B cell (primary cell): ENCODE measurements at regions of chr19 and their contacts with region 1.

Region 1: GRCh38 chr19:7799640-7800355 is 30.2 kb upstream of the EVI5L start:
- DNase-seq: peak; percentile 79
- ATAC-seq: peak; percentile 64
- H3K4me3 ChIP-seq: peak overlapping the region in 4 of 5 experiments; percentile 17 to 27 (median 20)
- H3K4me3 Mint-ChIP-seq: peak overlapping the region; percentile 60
- H3K27ac ChIP-seq: no peak overlapping the region
- H3K27ac Mint-ChIP-seq: no peak overlapping the region
- H3K4me1 ChIP-seq: peaks cover 7 to 16% of the 10 kb centered on the region in 2 donors
- H3K4me1 Mint-ChIP-seq: peaks cover 9% of the 10 kb centered on the region
- H3K27me3 ChIP-seq: peaks cover 0 to 13% (median 3%) of the 10 kb centered on the region in 4 experiments
- H3K27me3 Mint-ChIP-seq: peaks cover 10% of the 10 kb centered on the region
- CTCF ChIP-seq: peak; percentile 84

Region 2: GRCh38 chr19:7562646-7563393 is 237.0 kb before region 1 on chr19:
- CTCF ChIA-PET with region 1: interaction called, 42 read pairs
- POLR2A ChIA-PET with region 1: no interaction called
- intact Hi-C with region 1: no loop called
- DNase-seq: peak; percentile 19
- ATAC-seq: no peak
- H3K4me3 ChIP-seq: no peak overlapping the region
- H3K4me3 Mint-ChIP-seq: no peak overlapping the region
- H3K27ac ChIP-seq: no peak overlapping the region
- H3K27ac Mint-ChIP-seq: no peak overlapping the region
- H3K4me1 ChIP-seq: no peaks in the 10 kb centered on the region
- H3K4me1 Mint-ChIP-seq: no peaks in the 10 kb centered on the region
- H3K27me3 ChIP-seq: no peaks in the 10 kb centered on the region
- H3K27me3 Mint-ChIP-seq: no peaks in the 10 kb centered on the region
- CTCF ChIP-seq: no peak

Region 3: GRCh38 chr19:7692417-7693088 is 107.2 kb before region 1 on chr19:
- CTCF ChIA-PET with region 1: interaction called, 58 read pairs
- POLR2A ChIA-PET with region 1: no interaction called
- intact Hi-C with region 1: loop called (anchors 5 kb)
- DNase-seq: no peak
- ATAC-seq: no peak
- H3K4me3 ChIP-seq: no peak overlapping the region
- H3K4me3 Mint-ChIP-seq: no peak overlapping the region
- H3K27ac ChIP-seq: peak overlapping the region; percentile 43 to 59
- H3K27ac Mint-ChIP-seq: no peak overlapping the region
- H3K4me1 ChIP-seq: peaks cover 66 to 69% of the 10 kb centered on the region in 2 donors
- H3K4me1 Mint-ChIP-seq: peaks cover 33% of the 10 kb centered on the region
- H3K27me3 ChIP-seq: no peaks in the 10 kb centered on the region
- H3K27me3 Mint-ChIP-seq: no peaks in the 10 kb centered on the region
- CTCF ChIP-seq: no peak

Region 4: GRCh38 chr19:7705387-7706187 is 94.2 kb before region 1 on chr19:
- CTCF ChIA-PET with region 1: interaction called, 58 read pairs
- POLR2A ChIA-PET with region 1: interaction called, 7 read pairs
- intact Hi-C with region 1: no loop called
- DNase-seq: peak; percentile 94
- ATAC-seq: peak; percentile 45
- H3K4me3 ChIP-seq: peak overlapping the region in 4 of 5 experiments; percentile 12 to 42 (median 21)
- H3K4me3 Mint-ChIP-seq: peak overlapping the region; percentile 87
- H3K27ac ChIP-seq: peak overlapping the region; percentile 95 to 98
- H3K27ac Mint-ChIP-seq: peak overlapping the region; percentile 100
- H3K4me1 ChIP-seq: peaks cover 90 to 97% of the 10 kb centered on the region in 2 donors
- H3K4me1 Mint-ChIP-seq: peaks cover 83% of the 10 kb centered on the region
- H3K27me3 ChIP-seq: no peaks in the 10 kb centered on the region
- H3K27me3 Mint-ChIP-seq: no peaks in the 10 kb centered on the region
- CTCF ChIP-seq: no peak

Region 5: DNA sequence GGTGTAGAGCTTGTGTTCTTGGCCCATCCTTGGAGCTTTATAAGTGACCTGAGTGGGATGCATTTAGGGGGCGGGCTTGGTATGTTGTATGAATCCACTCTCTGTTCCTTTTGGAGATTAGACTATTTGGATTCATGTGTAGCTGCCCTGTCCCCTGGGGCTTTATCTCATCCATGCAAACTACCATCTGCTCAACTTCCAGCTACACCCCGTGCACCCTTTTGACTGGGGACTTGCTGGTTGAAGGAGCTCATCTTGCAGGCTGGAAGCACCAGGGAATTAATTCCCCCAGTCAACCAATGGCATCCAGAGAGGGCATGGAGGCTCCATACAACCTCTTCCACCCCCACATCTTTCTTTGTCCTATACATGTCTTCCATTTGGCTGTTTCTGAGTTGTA is 30.6 kb before region 1 on chr19:
- CTCF ChIA-PET with region 1: interaction called, 12 read pairs
- POLR2A ChIA-PET with region 1: no interaction called
- intact Hi-C with region 1: no loop called
- DNase-seq: no peak
- ATAC-seq: no peak
- H3K4me3 ChIP-seq: no peak overlapping the region
- H3K4me3 Mint-ChIP-seq: no peak overlapping the region
- H3K27ac ChIP-seq: no peak overlapping the region
- H3K27ac Mint-ChIP-seq: no peak overlapping the region
- H3K4me1 ChIP-seq: peaks cover 9% of the 10 kb centered on the region in 2 donors
- H3K4me1 Mint-ChIP-seq: peaks cover 11% of the 10 kb centered on the region
- H3K27me3 ChIP-seq: peaks cover 0 to 11% (median 1%) of the 10 kb centered on the region in 4 experiments
- H3K27me3 Mint-ChIP-seq: peaks cover 35% of the 10 kb centered on the region
- CTCF ChIP-seq: no peak

Region 6: GRCh38 chr19:7868676-7869452 is 69.1 kb after region 1 on chr19:
- CTCF ChIA-PET with region 1: interaction called, 12 read pairs
- POLR2A ChIA-PET with region 1: no interaction called
- intact Hi-C with region 1: no loop called
- DNase-seq: peak; percentile 94
- ATAC-seq: peak; percentile 71
- H3K4me3 ChIP-seq: peak overlapping the region in 4 of 5 experiments; percentile 48 to 63 (median 56)
- H3K4me3 Mint-ChIP-seq: peak overlapping the region; percentile 86
- H3K27ac ChIP-seq: peak overlapping the region; percentile 29 to 48
- H3K27ac Mint-ChIP-seq: peak overlapping the region; percentile 65
- H3K4me1 ChIP-seq: peaks cover 40 to 47% of the 10 kb centered on the region in 2 donors
- H3K4me1 Mint-ChIP-seq: peaks cover 37% of the 10 kb centered on the region
- H3K27me3 ChIP-seq: peaks cover 0 to 82% (median 25%) of the 10 kb centered on the region in 4 experiments
- H3K27me3 Mint-ChIP-seq: peaks cover 32% of the 10 kb centered on the region
- CTCF ChIP-seq: peak; percentile 95